ENCODE measurements at regions of chr3 and their contacts with region 1.

Region 1: DNA sequence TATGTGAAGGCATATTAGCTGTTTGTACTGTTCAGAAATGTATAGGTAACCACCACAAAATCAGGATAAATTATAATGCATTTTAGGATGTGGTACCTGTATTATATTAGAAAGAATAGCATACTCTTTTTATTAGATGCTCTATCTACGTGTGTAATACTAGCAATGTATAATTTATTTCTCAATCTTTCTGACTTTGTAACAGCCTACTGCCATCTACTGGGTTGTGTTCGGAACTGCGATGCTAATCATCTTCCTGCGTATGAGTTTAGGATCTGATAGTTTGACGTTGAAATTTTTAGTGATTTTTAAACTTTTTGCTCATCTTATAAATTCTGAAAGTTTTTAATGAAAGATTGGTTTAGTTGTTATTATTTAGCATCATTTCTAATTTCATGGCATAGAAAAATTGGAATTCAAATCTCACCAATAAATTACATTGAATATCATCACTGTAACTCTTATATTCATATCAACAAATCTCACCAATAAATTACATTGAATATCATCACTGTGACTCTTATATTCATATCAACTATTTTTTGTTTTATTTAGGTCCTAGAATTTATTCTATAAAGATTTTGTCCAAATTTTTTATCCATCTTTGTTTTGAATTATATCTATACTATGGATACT is 322.7 kb upstream of the ZNF717 start:
- DNase-seq: peak; percentile 72
- ATAC-seq: peak; percentile 75
- H3K4me3 ChIP-seq: no peak overlapping the region
- H3K27ac ChIP-seq: no peak overlapping the region
- H3K4me1 ChIP-seq: no peaks in the 10 kb centered on the region
- H3K27me3 ChIP-seq: no peaks in the 10 kb centered on the region
- CTCF ChIP-seq: peak; percentile 93

Region 2: GRCh38 chr3:75650191-75650590 is 457.9 kb before region 1 on chr3:
- CTCF ChIA-PET with region 1: no interaction called
- POLR2A ChIA-PET with region 1: no interaction called
- intact Hi-C with region 1: no loop called
- DNase-seq: no peak
- ATAC-seq: no peak
- H3K4me3 ChIP-seq: no peak overlapping the region
- H3K27ac ChIP-seq: no peak overlapping the region
- H3K4me1 ChIP-seq: no peaks in the 10 kb centered on the region
- H3K27me3 ChIP-seq: no peaks in the 10 kb centered on the region
- CTCF ChIP-seq: no peak

Region 3: DNA sequence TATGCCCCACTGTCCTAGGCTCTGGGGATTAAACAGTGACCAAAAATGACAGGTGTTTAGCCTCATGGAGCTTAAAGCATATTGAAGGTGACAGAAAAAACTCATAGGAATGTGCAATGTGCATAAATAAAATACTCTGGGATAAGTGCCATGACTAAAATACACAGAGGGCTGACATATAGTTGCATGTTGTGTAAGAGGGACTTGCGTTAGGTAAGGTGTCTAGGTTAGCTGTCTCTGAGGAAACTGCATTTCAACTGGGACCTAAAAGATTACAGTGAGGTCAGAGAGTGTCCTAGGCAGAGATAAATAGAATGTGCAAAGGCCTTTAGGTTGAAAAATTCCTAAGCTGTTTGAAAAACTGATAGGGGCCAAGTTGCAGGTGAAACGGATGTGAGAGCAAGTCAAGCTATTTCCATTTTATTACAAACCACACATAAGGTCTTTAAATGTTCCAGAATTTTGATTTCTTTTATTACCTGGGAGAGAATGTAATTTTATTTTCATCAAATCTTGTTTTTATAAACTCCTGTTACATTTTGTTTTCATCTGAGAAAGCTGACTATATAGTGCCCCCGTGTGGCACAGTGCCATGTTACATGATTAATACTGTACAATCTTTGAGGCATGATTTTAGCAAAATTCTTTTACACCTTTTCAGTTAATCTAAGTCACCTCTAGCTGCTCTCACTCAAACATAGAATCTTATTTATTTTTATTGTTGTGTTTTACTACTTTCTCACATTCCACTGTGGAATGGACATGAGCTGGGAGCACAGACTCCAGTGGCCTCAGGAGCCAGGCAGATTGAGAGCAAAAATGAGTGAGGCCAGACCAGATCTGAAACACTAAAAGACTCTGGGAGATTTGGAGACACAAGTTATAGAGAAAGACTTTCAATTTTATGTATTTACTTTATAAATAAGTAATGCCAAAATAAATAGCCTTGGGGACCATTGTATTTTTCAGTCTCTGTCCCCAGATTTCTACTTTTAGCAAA is 63.2 kb before region 1 on chr3:
- CTCF ChIA-PET with region 1: no interaction called
- POLR2A ChIA-PET with region 1: no interaction called
- intact Hi-C with region 1: loop called (anchors 1 kb)
- DNase-seq: peak; percentile 69
- ATAC-seq: peak; percentile 60
- H3K4me3 ChIP-seq: no peak overlapping the region
- H3K27ac ChIP-seq: no peak overlapping the region
- H3K4me1 ChIP-seq: peaks cover 6% of the 10 kb centered on the region
- H3K27me3 ChIP-seq: no peaks in the 10 kb centered on the region
- CTCF ChIP-seq: peak; percentile 88